Pancreas (tissue), 10 donors: ENCODE measurements at regions of chr7 and their contacts with region 1.

Region 1: DNA sequence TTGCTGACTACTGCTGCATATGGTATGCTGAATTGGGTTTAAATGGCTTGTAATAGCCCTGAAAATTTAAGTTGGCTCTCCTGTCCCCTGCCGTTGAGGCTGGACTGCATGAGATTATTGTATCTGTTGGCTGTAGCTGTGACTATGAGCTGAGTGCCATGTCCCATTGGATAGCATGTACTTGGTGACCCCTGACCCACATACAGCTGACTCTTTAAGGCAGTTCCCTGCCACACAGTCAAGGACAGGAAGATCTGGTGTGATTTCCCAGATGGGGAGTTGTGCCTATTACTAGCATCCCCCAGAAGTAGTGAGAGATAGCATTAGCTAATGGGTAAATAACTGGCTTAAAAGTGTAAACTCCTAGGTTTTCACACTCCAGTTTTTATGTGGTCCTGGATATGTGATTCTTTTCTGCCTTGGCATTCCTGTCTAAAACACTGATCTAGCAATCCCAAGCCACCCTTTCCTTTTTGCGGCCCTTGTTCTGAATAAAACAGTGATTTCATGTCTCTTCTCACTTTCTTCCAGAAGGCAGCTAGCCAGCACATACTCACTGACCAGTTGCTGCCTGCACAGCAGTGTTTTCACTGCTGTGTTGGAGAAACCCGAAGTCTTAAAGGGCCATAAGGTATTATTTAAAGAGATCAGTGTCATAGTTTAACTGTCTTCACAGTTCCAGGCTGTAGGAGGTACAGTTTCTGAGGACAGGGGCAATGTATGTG is 35.9 kb downstream of the LRRC4 start:
- DNase-seq: no peak
- ATAC-seq: peak; percentile 18 to 44 (median 32)
- H3K4me3 ChIP-seq: no peak overlapping the region
- H3K27ac ChIP-seq: no peak overlapping the region
- H3K4me1 ChIP-seq: no peaks in the 10 kb centered on the region
- H3K27me3 ChIP-seq: no peaks in the 10 kb centered on the region
- CTCF ChIP-seq: no peak

Region 2: GRCh38 chr7:127865466-127865865 is 129.9 kb before region 1 on chr7:
- intact Hi-C with region 1: loop called in 1 of 3 experiments (anchors 5 kb)
- DNase-seq: no peak
- ATAC-seq: peak in 3 of 4 donors; percentile 63 to 77 (median 65)
- H3K4me3 ChIP-seq: no peak overlapping the region
- H3K27ac ChIP-seq: no peak overlapping the region
- H3K4me1 ChIP-seq: peaks cover 0 to 4% (median 0%) of the 10 kb centered on the region in 3 donors
- H3K27me3 ChIP-seq: no peaks in the 10 kb centered on the region
- CTCF ChIP-seq: no peak

Region 3: DNA sequence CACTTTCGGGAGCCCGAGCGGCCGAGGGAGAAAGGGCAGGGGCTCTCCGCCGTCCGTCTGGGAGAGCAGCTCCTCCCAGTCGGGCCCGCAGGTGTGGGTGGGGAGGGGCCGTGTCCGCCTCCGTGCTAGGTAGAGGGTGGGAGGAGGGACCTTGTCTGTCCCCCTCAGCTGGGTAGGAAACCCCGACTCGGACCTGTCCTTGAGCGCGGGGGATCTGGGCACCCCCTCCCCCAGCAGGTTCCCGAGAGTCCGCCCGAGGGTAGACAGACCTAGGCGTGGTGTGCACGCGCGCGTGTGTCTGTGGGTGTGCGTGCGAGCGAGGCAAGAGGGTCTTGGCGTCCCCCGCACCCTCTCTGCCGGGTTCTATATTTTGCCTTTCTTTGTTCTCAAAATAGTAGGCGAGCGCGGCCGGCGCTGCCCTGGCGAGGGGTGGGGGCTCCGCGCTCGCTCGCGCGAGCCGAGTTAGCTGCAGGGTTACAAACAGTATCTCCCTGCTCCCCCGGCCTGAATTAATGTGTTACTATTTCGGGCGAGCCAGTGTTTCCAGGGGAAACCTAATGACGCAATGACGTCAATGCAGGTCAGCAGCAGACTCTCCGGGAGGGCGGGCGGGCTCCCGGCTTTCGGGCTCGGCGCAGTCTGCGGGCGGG is 171.8 kb after region 1 on chr7:
- intact Hi-C with region 1: no loop called
- DNase-seq: peak; percentile 65 to 84 (median 70)
- ATAC-seq: peak; percentile 83 to 87 (median 85)
- H3K4me3 ChIP-seq: peak overlapping the region; percentile 28 to 66 (median 50)
- H3K27ac ChIP-seq: peak overlapping the region in 3 of 4 donors; percentile 22 to 62 (median 46)
- H3K4me1 ChIP-seq: peaks cover 0 to 3% (median 0%) of the 10 kb centered on the region in 3 donors
- H3K27me3 ChIP-seq: peaks cover 0 to 3% (median 0%) of the 10 kb centered on the region in 4 donors
- CTCF ChIP-seq: no peak